ENCODE measurements at regions of chr9 and their contacts with region 1.

Region 1: GRCh38 chr9:130682490-130683121 is 11.0 kb upstream of the EXOSC2 start:
- DNase-seq: no peak
- H3K4me3 ChIP-seq: peak overlapping the region; percentile 39
- CTCF ChIP-seq: peak; percentile 77

Region 2: DNA sequence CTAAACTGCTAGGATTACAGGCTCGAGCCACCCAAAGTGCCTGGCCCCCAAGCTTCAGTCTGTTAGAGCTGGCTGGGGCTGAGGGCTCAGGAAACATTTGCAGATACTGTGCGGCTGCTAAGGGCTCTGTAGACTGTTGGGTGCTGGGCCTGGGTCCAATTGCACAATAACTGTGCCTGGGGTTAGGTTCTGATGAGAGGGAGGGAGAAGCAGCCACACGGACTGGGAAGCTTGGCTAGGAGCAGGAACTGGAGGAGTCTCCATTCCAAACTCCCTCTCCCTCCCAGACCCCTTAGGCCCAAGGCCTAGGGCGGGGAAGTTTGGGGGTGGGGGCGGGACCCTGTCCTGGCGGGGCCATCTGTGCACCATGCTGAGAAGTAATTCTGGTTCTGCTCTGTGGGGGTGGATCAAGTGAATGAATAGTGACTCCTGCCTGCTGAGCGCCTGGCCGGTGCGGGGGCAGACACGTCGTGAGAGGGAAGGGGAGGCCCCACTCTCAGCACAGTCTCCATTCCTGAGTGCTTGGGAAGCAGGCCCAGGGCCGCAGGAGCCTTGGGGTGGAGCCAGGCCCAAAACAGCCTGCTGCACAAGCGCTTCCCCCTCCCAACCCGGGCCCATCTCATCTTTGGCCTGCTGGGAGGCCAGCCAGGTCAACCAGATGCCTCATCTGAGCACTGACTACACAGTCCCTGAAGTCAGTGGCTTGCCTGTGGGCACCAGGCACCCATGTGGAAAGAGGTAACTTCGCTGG is 236.3 kb before region 1 on chr9:
- CTCF ChIA-PET with region 1: interaction called, 17 read pairs
- POLR2A ChIA-PET with region 1: no interaction called
- DNase-seq: peak; percentile 59
- H3K4me3 ChIP-seq: peak overlapping the region; percentile 59
- CTCF ChIP-seq: no peak

Region 3: DNA sequence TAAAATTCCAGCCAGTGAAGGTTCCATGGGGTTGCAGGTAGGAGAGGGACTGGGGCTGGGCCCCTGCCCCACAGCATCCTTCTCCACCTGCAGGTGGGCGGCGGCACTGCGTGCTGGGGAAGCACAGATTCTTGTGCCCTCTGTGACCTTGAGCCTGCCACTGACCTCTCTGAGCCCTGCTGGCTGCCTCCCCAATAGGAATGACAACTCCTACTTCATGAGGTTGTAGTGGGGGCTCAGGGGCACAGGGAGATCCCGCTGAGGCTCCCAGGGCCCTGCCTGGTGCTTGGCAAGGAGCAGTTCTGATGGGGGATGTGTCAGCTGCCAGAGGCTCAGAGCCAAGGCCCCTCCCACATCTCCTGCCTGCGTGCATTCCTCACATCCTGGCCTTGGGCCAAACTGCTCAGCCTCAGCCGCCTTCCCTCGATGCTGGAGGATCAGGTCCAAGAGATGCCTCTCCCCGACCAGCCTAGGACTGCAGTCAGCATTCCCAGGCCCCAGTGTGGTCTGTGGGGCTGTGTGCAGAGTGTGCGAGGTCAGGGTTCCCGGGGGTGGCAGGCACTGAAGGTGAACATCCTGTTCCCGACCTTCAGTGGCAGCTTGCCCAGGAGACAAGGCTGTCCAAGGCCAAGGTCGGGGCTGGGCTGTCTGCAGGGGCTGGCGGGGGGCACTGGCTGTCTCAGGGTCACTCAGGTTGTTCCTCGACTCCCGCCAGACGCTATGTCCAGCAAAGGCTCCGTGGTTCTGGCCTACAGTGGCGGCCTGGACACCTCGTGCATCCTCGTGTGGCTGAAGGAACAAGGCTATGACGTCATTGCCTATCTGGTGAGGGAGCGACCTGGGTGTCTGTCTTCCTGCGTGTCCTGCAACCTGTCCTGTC is 230.9 kb before region 1 on chr9:
- CTCF ChIA-PET with region 1: interaction called, 414 read pairs
- POLR2A ChIA-PET with region 1: no interaction called
- DNase-seq: peak; percentile 63
- H3K4me3 ChIP-seq: no peak overlapping the region
- CTCF ChIP-seq: peak; percentile 57

Region 4: GRCh38 chr9:130461218-130461630 is 221.4 kb before region 1 on chr9:
- CTCF ChIA-PET with region 1: interaction called, 414 read pairs
- POLR2A ChIA-PET with region 1: interaction called, 3 read pairs
- DNase-seq: no peak
- H3K4me3 ChIP-seq: no peak overlapping the region
- CTCF ChIP-seq: peak; percentile 94

Region 5: GRCh38 chr9:130665431-130666392 is 16.9 kb before region 1 on chr9:
- CTCF ChIA-PET with region 1: interaction called, 10 read pairs
- POLR2A ChIA-PET with region 1: no interaction called
- DNase-seq: no peak
- H3K4me3 ChIP-seq: no peak overlapping the region
- CTCF ChIP-seq: no peak

Region 6: GRCh38 chr9:130672466-130672865 is 10.1 kb before region 1 on chr9:
- CTCF ChIA-PET with region 1: interaction called, 14 read pairs
- POLR2A ChIA-PET with region 1: no interaction called
- DNase-seq: no peak
- H3K4me3 ChIP-seq: no peak overlapping the region
- CTCF ChIP-seq: no peak

Region 7: GRCh38 chr9:130693426-130694191 is 11.0 kb after region 1 on chr9 and contains the start of gene EXOSC2:
- CTCF ChIA-PET with region 1: interaction called, 28 read pairs
- POLR2A ChIA-PET with region 1: no interaction called
- DNase-seq: peak; percentile 88
- H3K4me3 ChIP-seq: peak within 1 kb of the TSS; percentile 86
- CTCF ChIP-seq: no peak

Measured in AG04449 (cell line).